ENCODE measurements at regions of chr4 and their contacts with region 1.

Region 1: DNA sequence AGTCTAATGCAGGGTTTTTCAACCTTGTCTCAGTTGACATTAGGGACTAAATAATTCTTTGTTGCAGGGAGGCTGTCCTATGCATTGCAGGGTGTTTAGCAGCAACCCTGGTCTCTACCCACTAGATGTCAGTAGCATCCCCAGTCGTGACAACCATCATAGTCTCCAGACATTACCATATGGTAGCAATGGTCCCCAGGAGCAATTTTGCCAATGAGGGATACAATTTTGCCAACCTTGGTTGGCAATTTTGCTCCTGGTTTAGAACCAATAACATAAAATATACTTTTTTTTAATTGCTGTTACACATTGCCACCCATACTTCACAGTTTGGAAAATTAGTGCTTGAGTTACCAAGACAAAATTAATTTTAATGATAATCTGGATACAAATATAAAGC is 6.0 kb downstream of the EREG start:
- DNase-seq: no peak
- ATAC-seq: peak; percentile 37

Region 2: GRCh38 chr4:74267998-74268606 is 102.8 kb before region 1 on chr4:
- intact Hi-C with region 1: no loop called
- DNase-seq: no peak
- ATAC-seq: no peak

Region 3: DNA sequence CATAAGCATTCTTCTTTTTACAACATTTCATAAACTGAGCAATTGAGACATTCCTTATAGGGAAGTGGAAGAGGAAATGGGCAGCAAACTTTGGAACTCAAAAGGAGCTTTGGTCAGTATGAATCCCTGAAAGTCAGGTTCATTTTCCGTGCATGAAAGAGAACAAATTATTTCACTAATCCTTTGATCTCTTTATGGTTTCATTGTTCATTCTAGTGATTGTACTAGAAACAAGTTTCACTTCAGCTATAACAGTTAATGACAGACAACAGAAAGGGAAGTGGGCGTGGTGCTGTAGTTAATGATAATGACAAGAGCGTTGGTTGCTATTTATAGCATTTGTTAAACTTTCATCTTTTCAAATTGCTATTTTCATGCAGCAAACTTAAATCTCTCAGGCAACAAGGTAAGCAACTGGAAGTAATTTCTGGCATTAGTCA is 172.3 kb after region 1 on chr4:
- intact Hi-C with region 1: loop called in 1 of 2 experiments (anchors 10 kb)
- DNase-seq: no peak
- ATAC-seq: peak; percentile 52

Region 4: DNA sequence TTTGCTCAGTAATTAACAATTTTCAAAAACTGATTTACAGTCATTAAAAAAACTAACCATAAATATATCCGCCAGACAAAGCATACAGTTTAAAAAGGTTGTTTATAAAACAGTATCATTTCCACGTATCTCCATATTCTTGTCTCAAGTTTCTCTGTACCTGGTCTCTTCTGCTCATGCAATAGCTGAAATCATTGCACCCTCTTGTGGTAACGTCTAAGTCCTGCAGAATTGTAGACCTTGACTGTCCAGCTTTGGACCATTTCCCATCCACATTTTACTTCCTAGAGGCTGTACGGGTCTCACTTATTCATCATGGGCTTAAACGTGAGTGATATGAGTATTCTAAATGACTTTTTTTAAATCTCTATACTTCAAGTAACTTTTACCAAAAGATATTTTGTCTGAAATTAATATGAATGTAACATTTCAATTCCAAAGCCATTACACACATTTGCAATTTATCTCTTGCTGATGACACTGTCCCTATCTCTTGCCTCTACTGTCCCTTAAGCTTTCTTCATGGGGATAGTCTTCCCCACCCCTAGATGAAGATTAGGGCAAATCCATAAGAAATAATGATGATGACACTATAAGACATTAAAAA is 304.9 kb after region 1 on chr4:
- intact Hi-C with region 1: loop called in 1 of 2 experiments (anchors 2 kb)
- DNase-seq: no peak
- ATAC-seq: peak; percentile 90

Region 5: DNA sequence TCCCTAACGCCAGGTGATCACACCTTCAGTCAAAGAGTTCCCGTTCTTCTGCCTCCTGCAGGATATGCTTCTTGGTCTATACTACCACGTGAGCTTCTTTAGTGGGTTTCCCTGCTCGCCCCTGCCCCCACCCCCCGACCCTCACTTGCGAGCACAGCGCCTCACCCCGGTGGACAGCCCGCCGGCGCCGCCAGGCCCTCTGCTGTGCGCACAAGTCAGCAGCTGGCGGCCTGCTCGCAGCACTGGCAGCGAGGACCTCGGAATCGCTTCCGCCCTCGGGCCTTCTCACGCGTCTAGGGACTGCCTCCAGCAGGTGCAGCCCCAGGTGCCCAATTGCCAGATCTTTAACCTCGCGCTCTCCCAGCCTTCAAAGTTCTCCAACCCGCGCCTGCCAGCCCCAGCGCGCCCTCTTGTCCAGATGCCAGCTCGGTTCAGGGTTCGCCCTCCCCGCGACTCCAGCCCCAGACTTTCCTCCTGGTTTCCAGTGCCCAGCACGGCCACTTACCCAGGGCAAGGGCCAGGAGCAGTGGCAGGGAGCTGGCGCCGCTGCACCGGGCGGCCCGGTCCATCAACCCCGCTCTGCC is 422.9 kb after region 1 on chr4:
- intact Hi-C with region 1: loop called in 1 of 2 experiments (anchors 10 kb)
- DNase-seq: peak; percentile 79 to 81
- ATAC-seq: peak; percentile 89

Region 6: DNA sequence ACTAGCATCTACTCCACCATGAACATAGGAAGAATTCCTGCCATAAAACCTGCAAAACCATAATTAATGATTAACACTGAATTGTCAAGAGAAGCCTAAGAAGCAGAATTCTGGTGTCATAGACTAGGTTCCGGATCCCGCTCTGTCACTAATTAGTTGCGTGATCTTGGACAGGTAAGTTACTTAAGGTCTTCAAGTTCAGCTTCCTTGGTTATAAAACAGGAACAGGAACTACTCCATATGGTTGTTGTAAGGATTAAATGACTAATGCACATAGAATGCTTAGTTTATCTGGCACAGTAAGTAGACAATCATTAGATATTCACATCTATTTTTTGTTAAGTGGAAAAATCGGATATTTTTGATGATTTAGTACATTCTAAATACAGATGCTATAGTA is 1288.0 kb after region 1 on chr4:
- intact Hi-C with region 1: no loop called
- DNase-seq: no peak
- ATAC-seq: peak; percentile 76

Measured in left colon (tissue), 2 donors.